Activated naive CD4-positive, alpha-beta T cell treated with anti-CD3 and anti-CD28 coated beads for 36 hours (primary cell): ENCODE measurements at regions of chr13 and their contacts with region 1.

Region 1: GRCh38 chr13:30371649-30372265 is 50.5 kb upstream of the UBE2L5 start:
- DNase-seq: peak; percentile 87
- H3K4me3 Mint-ChIP-seq: peak overlapping the region; percentile 58
- H3K27ac Mint-ChIP-seq: peak overlapping the region; percentile 87
- H3K4me1 Mint-ChIP-seq: peaks cover 75% of the 10 kb centered on the region
- H3K27me3 Mint-ChIP-seq: no peaks in the 10 kb centered on the region

Region 2: GRCh38 chr13:30306762-30307193 is 65.0 kb before region 1 on chr13:
- CTCF ChIA-PET with region 1: interaction called, 4 read pairs
- intact Hi-C with region 1: loop called (anchors 1 kb)
- DNase-seq: peak; percentile 94
- H3K4me3 Mint-ChIP-seq: peak overlapping the region; percentile 83
- H3K27ac Mint-ChIP-seq: peak overlapping the region; percentile 76
- H3K4me1 Mint-ChIP-seq: peaks cover 14% of the 10 kb centered on the region
- H3K27me3 Mint-ChIP-seq: no peaks in the 10 kb centered on the region

Region 3: DNA sequence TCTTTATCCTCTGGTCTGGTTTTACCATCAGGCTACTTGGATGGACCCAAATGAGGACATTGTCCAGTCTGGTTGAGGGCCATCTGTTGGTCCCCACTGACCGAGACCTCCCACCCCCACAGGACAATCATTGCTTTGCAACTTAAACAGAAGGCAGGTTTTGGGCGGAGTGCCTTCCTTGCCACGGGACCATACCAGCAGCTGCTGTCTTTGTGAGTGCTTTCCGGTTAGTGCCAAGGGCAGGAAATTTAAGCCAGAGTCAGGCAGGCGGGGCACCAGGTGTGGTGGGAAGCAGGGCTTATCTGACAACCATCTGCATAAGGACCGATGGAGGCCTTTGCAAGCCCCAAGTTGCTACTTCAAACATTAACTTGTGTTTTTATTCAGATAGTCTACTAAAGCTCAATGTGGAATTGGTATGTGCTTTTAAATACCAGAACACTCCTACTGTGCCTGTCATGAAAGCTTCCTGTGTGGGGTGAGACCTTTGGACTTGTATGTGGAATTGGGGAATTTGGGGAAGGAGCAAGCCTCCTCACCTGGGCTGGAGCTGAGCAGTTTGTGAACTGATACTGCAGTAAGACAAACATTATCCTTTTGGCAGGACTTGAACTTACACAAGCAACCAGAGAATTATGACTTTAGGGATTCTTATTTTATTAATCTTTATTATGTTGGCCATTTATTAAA is 11.2 kb after region 1 on chr13:
- CTCF ChIA-PET with region 1: interaction called, 16 read pairs
- intact Hi-C with region 1: loop called (anchors 1 kb)
- DNase-seq: peak; percentile 37
- H3K4me3 Mint-ChIP-seq: no peak overlapping the region
- H3K27ac Mint-ChIP-seq: no peak overlapping the region
- H3K4me1 Mint-ChIP-seq: peaks cover 31% of the 10 kb centered on the region
- H3K27me3 Mint-ChIP-seq: no peaks in the 10 kb centered on the region

Region 4: DNA sequence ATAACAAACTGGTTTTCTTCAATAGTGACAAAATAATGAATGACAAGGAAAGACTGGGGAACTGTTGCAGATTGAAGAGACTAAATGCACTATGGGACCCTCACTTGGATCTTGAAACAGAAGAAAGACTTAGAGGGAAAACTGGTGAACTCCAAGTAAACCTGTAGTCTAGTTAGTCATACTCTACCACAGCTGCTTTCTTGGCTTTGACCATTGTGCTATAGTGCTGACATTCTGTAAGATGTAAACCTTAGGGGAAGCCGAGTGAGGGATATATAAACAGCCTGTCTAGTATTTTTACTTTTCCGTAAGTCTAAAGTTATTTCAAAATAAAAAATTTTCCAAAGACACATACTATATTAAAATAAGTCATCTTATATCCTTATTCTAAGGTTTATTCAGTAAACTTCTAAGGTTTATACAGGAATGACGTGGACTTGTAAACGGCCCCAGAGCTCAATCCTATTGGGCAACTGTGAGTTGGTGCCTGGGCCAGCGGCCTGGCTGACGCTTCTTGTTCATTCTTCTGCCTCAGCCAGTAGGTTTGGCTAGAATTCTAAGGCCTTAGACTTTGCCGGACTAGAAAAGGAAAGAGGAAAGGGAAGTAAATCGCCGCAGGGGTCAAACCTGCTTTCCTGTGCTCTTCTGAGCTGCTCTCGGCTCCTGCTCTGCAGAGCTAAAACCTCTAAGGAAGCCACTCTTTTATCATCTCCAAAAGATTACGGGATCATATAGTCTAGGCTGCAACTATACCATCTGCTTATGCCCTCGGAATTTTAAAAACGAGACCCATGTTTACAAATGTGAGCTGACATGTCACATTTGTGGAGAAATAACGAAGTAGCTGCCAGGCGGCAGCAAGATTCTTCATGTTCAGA is 16.9 kb after region 1 on chr13:
- CTCF ChIA-PET with region 1: interaction called, 47 read pairs
- intact Hi-C with region 1: loop called (anchors 1 kb)
- DNase-seq: no peak
- H3K4me3 Mint-ChIP-seq: peak overlapping the region; percentile 60
- H3K27ac Mint-ChIP-seq: peak overlapping the region; percentile 61
- H3K4me1 Mint-ChIP-seq: peaks cover 26% of the 10 kb centered on the region
- H3K27me3 Mint-ChIP-seq: no peaks in the 10 kb centered on the region

Region 5: DNA sequence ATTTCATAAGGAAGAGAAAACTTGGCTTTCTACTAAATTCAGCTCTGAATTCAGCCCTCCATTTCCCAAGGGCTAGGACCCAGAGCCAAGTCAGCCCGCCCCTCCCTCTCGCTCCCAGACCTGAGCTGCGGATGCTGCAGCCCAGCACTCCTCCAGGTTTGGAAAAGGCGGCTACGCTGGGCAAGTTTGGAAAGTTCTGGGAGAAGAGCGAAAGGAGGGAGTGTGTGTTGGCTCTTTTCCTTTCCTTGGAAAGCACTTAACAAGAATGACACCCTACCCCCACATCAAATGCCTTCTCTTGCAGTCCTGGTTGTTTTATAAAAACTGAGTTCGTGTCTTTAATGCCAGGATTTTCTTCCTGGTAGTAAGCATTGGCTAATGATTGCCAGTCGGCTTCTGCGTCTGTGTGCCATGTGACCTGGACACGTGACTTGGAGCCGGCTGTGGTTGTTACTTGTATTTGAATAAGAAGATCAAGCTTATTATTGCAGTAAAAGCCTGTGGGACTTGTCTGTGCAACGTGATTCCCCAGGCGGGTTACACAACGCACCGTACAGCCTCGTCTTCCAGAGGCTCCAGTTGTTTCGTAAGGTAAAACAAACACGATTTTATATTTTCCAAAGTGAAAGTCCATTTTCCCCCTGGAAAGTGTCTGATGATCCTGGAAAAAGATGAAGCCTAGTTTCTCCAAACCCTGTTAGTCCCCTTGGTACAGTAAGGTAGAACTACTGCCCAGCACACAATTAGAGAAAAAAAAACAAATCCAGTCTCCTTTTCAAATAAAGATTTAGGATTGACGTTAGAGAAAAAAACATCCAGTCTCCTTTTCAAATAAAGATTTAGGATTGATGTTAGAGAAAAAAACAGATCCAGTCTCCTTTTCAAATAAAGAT is 23.7 kb after region 1 on chr13:
- CTCF ChIA-PET with region 1: interaction called, 47 read pairs
- intact Hi-C with region 1: loop called (anchors 1 kb)
- DNase-seq: peak; percentile 88
- H3K4me3 Mint-ChIP-seq: peak overlapping the region; percentile 85
- H3K27ac Mint-ChIP-seq: peak overlapping the region; percentile 94
- H3K4me1 Mint-ChIP-seq: peaks cover 23% of the 10 kb centered on the region
- H3K27me3 Mint-ChIP-seq: no peaks in the 10 kb centered on the region

Region 6: GRCh38 chr13:30429721-30430694 is 58.3 kb after region 1 on chr13:
- CTCF ChIA-PET with region 1: no interaction called
- intact Hi-C with region 1: loop called (anchors 1 kb)
- DNase-seq: peak; percentile 53
- H3K4me3 Mint-ChIP-seq: peak overlapping the region; percentile 47
- H3K27ac Mint-ChIP-seq: peak overlapping the region; percentile 82
- H3K4me1 Mint-ChIP-seq: peaks cover 29% of the 10 kb centered on the region
- H3K27me3 Mint-ChIP-seq: no peaks in the 10 kb centered on the region

Region 7: GRCh38 chr13:30629527-30629926 is 257.8 kb after region 1 on chr13:
- CTCF ChIA-PET with region 1: no interaction called
- intact Hi-C with region 1: no loop called
- DNase-seq: no peak
- H3K4me3 Mint-ChIP-seq: no peak overlapping the region
- H3K27ac Mint-ChIP-seq: no peak overlapping the region
- H3K4me1 Mint-ChIP-seq: peaks cover 38% of the 10 kb centered on the region
- H3K27me3 Mint-ChIP-seq: no peaks in the 10 kb centered on the region